GM10248 (cell line): ENCODE measurements at regions of chr6 and their contacts with region 1.

Region 1: GRCh38 chr6:37303932-37304363 is 46.0 kb upstream of the TMEM217 start:
- DNase-seq: peak; percentile 44
- CTCF ChIP-seq: peak; percentile 61

Region 2: GRCh38 chr6:37289931-37290330 is 14.0 kb before region 1 on chr6:
- CTCF ChIA-PET with region 1: interaction called, 12 read pairs
- POLR2A ChIA-PET with region 1: interaction called, 4 read pairs
- DNase-seq: no peak
- CTCF ChIP-seq: no peak

Region 3: DNA sequence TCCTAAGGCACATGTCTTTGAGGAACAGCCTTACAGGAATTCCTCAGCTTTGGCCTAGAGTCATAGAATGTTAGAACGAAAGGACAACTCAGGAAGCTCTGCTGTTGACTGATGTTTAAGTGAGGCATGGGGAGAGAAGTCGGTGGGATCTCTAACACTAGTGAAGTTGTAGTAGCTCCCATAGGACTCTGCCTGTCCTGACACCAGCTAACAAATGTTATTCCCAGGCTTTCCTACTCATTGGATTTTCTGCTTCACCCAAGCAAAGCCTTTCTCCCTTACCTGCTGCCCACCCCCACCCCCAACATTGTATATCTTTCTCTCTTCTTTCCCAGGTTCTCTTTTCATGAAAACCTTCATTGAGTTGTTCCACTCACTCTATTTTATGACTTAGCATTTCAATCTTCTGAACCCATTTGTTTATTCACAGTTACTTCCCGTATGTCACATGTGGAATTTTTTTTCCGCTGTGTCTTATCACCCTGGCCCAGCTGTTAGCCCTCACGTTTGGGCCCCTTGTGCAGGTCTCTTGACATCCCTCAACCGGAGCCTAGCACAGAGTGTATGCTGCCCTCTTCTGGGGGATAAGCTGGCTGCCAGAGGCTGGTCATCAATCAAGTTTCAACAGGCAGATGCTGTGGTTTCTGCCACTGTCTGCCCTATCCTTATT is 10.7 kb after region 1 on chr6:
- CTCF ChIA-PET with region 1: interaction called, 61 read pairs
- POLR2A ChIA-PET with region 1: no interaction called
- DNase-seq: peak; percentile 62
- CTCF ChIP-seq: peak; percentile 63